GM12878 (cell line): ENCODE measurements at regions of chr20 and their contacts with region 1.

Region 1: GRCh38 chr20:44609511-44610312 is 27.3 kb downstream of the PKIG start:
- DNase-seq: no peak
- ATAC-seq: peak; percentile 98
- H3K4me3 ChIP-seq: no peak overlapping the region
- H3K27ac ChIP-seq: peak overlapping the region; percentile 57
- H3K4me1 ChIP-seq: peaks cover 13% of the 10 kb centered on the region
- H3K27me3 ChIP-seq: no peaks in the 10 kb centered on the region
- CTCF ChIP-seq: peak; percentile 98 to 99 (median 99); a peak in 5 of 6 replicates
- EP300 ChIP-seq: no peak
- POLR2A ChIP-seq: no peak
- RAD21 ChIP-seq: peak; percentile 99

Region 2: DNA sequence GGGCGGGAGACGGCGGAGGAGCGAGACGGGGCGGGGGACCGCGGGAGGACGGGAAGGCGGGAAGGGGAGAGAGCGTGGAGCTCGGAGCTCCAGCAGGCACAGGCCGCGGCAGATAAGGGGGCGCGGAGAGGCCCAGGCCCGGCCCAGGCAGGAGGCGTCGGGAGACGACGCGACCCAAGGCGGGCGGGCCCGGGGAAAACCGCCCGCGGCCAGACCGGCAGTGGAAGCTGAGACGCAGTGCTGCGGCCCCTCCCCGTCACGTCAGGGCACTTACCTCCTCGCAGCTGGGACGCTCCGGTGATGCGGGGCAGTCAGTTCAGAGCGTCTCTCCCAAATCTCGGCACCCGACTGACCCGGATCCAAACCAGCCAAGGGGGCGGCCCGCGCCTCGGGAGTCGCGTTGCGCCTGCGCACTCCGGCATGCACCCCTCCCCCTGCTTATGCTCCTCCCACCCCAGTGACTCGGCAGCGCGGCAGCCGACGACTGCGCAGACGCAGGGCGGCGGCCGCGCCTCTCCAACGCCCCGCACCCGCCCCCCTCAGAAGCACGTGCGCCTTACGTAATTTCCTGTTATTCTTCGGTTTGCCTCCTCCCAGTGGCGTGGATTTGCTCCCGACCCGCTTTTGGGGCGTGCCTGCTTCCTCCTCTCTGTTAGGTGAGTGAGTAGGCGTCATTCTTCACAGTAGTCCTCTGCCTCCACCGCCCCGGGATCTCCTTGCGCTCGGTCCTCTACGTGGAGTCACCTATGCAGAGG is 399.1 kb before region 1 on chr20 and contains the start of gene OSER1:
- CTCF ChIA-PET with region 1: interaction called, 4 read pairs
- POLR2A ChIA-PET with region 1: no interaction called
- RAD21 ChIA-PET with region 1: no interaction called
- SMC1A ChIA-PET with region 1: interaction called, 3 read pairs
- in situ Hi-C with region 1: loop called (anchors 10 kb)
- intact Hi-C with region 1: no loop called
- DNase-seq: peak; percentile 88
- ATAC-seq: peak; percentile 88
- H3K4me3 ChIP-seq: peak within 1 kb of the TSS; percentile 98
- H3K27ac ChIP-seq: peak within 1 kb of the TSS; percentile 89
- H3K4me1 ChIP-seq: peaks cover 4% of the 10 kb centered on the region; the same call in 1 of the 2 replicates
- H3K27me3 ChIP-seq: no peaks in the 10 kb centered on the region
- CTCF ChIP-seq: no peak
- EP300 ChIP-seq: 0 out of 4 replicates have a peak, but pooled peaks have one; percentile 27 to 44
- POLR2A ChIP-seq: peak; percentile 80
- RAD21 ChIP-seq: no peak
- polyA plus RNA-seq, gene OSER1: 50.3 to 63.8 TPM

Region 3: DNA sequence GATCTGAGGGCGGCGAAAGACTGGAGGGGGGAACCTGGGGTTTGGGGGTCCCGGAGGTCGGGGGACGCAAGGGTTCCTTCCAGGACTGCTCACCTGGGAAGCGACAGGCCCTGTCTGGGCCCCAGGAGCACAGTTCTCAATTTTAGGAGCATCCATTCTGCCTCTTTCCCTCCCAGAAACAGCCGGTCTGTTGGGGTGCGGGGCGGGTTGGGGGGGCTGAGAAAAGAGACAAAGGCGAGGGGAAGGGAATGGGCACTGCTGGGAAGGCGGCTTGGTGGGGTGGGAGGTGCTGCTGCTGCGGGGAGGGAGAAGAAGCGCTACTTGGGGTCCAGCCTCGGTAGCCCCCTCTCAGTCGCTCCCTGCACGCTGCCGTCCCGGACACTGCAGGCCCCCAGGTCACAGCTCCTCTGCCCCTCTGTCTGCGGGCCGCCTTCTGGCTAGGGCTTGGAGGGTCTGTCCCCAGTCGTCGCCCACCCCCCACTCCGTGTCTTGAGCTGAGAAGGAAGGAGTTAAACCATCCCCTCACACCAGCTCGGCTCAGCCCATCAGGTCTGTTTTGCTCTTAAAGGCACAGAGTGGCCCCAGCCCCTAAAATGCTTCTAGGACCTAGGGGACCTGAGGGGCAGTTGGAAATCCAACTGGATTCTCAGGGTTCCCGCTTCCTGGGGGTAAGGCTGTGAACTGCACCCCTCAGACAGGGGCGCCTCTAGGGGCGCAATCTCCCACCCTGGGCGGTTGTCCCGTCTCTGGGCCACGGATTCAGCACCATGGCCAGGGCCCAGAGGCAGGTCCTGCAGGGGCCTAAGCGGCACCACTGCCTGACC is 361.9 kb before region 1 on chr20:
- CTCF ChIA-PET with region 1: no interaction called
- POLR2A ChIA-PET with region 1: no interaction called
- RAD21 ChIA-PET with region 1: no interaction called
- SMC1A ChIA-PET with region 1: no interaction called
- in situ Hi-C with region 1: no loop called
- intact Hi-C with region 1: no loop called
- DNase-seq: no peak
- ATAC-seq: peak; percentile 74
- H3K4me3 ChIP-seq: no peak overlapping the region
- H3K27ac ChIP-seq: no peak overlapping the region
- H3K4me1 ChIP-seq: no peaks in the 10 kb centered on the region
- H3K27me3 ChIP-seq: peaks cover 3% of the 10 kb centered on the region in 2 experiments; a peak in 2 of 4 replicates
- CTCF ChIP-seq: peak in 2 of 3 experiments; percentile 42 to 49; a peak in 4 of 6 replicates
- EP300 ChIP-seq: no peak
- POLR2A ChIP-seq: no peak
- RAD21 ChIP-seq: no peak

Region 4: GRCh38 chr20:44388466-44389023 is 221.2 kb before region 1 on chr20:
- CTCF ChIA-PET with region 1: interaction called, 12 read pairs
- POLR2A ChIA-PET with region 1: no interaction called
- RAD21 ChIA-PET with region 1: interaction called, 5 read pairs
- SMC1A ChIA-PET with region 1: interaction called, 17 read pairs
- in situ Hi-C with region 1: loop called (anchors 5 kb)
- intact Hi-C with region 1: loop called (anchors 1 kb)
- DNase-seq: no peak
- ATAC-seq: peak; percentile 93
- H3K4me3 ChIP-seq: no peak overlapping the region
- H3K27ac ChIP-seq: no peak overlapping the region
- H3K4me1 ChIP-seq: no peaks in the 10 kb centered on the region
- H3K27me3 ChIP-seq: peaks cover 1 to 2% of the 10 kb centered on the region in 2 experiments; a peak in 2 of 4 replicates
- CTCF ChIP-seq: peak; percentile 78 to 90 (median 88)
- EP300 ChIP-seq: no peak
- POLR2A ChIP-seq: no peak
- RAD21 ChIP-seq: peak; percentile 73

Region 5: GRCh38 chr20:44560229-44560628 is 49.5 kb before region 1 on chr20:
- CTCF ChIA-PET with region 1: interaction called, 6 read pairs
- POLR2A ChIA-PET with region 1: no interaction called
- RAD21 ChIA-PET with region 1: interaction called, 10 read pairs
- SMC1A ChIA-PET with region 1: interaction called, 6 read pairs
- in situ Hi-C with region 1: no loop called
- intact Hi-C with region 1: no loop called
- DNase-seq: no peak
- ATAC-seq: peak; percentile 63
- H3K4me3 ChIP-seq: no peak overlapping the region
- H3K27ac ChIP-seq: no peak overlapping the region
- H3K4me1 ChIP-seq: peaks cover 2% of the 10 kb centered on the region; the same call in 1 of the 2 replicates
- H3K27me3 ChIP-seq: no peaks in the 10 kb centered on the region
- CTCF ChIP-seq: no peak
- EP300 ChIP-seq: no peak
- POLR2A ChIP-seq: no peak
- RAD21 ChIP-seq: no peak

Region 6: DNA sequence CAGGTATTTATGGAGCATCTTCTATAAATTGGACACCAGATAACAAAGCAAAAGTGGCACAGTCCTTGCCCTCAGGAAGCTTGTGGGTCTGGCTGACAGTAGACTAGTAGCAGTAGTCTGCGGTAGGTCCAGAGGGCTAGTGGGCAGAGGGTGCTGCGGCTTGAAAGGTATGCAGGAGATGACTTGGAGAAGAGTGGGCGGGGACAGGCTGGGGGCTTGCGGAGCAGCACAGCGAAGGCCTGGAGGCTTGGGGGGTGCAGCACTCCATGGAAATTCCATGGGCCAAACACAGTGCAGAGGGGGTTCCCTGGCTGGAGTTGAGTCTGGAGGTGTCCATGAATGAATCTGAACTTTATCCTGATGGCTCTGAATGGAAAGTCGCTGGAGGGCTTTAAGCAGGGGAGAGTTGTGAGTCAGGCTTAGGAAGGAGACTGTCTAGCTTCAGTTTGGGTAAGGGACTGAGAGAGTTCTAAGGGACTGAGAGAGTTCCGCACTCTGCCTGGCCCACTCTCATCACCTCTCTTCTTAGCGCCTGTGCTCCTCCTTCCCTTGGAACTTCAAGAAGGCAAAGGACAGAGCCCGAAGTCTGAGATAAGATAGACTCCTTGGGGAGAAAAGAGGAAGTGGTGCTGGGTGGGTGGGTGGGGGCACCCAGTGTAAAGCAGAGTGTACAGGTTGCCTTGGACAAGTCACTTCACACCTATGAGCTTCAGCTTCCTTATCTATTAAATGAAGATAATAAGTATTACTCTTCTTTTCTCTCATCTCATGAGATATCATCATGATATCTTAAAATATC is 18.5 kb before region 1 on chr20:
- CTCF ChIA-PET with region 1: interaction called, 48 read pairs
- POLR2A ChIA-PET with region 1: interaction called, 4 read pairs
- RAD21 ChIA-PET with region 1: interaction called, 33 read pairs
- SMC1A ChIA-PET with region 1: interaction called, 144 read pairs
- in situ Hi-C with region 1: no loop called
- intact Hi-C with region 1: no loop called
- DNase-seq: no peak
- ATAC-seq: 0 out of 3 replicates have a peak, but pooled peaks have one; percentile 7
- H3K4me3 ChIP-seq: no peak overlapping the region
- H3K27ac ChIP-seq: no peak overlapping the region
- H3K4me1 ChIP-seq: peaks cover 35% of the 10 kb centered on the region
- H3K27me3 ChIP-seq: no peaks in the 10 kb centered on the region
- CTCF ChIP-seq: no peak
- EP300 ChIP-seq: no peak
- POLR2A ChIP-seq: no peak
- RAD21 ChIP-seq: no peak

Region 7: GRCh38 chr20:44651684-44652423 is 42.1 kb after region 1 on chr20 and contains the start of gene ADA:
- CTCF ChIA-PET with region 1: interaction called, 14 read pairs
- POLR2A ChIA-PET with region 1: no interaction called
- RAD21 ChIA-PET with region 1: interaction called, 11 read pairs
- SMC1A ChIA-PET with region 1: interaction called, 6 read pairs
- in situ Hi-C with region 1: no loop called
- intact Hi-C with region 1: no loop called
- DNase-seq: no peak
- ATAC-seq: peak; percentile 66
- H3K4me3 ChIP-seq: peak within 1 kb of the TSS; percentile 95
- H3K27ac ChIP-seq: peak within 1 kb of the TSS; percentile 84
- H3K4me1 ChIP-seq: peaks cover 39% of the 10 kb centered on the region
- H3K27me3 ChIP-seq: no peaks in the 10 kb centered on the region
- CTCF ChIP-seq: peak in 1 of 3 experiments; percentile 16; a peak in 1 of 6 replicates
- EP300 ChIP-seq: no peak
- POLR2A ChIP-seq: peak; percentile 50; the same call in 1 of the 2 replicates
- RAD21 ChIP-seq: no peak
- polyA plus RNA-seq, gene ADA: 40.9 to 70.6 TPM